MCF 10A (cell line): ENCODE measurements at regions of chr11 and their contacts with region 1.

Region 1: GRCh38 chr11:114099392-114100178 is 40.1 kb downstream of the ZBTB16 start:
- DNase-seq: no peak
- H3K4me3 Mint-ChIP-seq: peak overlapping the region; percentile 7
- H3K27ac Mint-ChIP-seq: peak overlapping the region; percentile 77
- H3K4me1 Mint-ChIP-seq: peaks cover 79% of the 10 kb centered on the region
- H3K27me3 Mint-ChIP-seq: no peaks in the 10 kb centered on the region
- CTCF ChIP-seq: no peak

Region 2: DNA sequence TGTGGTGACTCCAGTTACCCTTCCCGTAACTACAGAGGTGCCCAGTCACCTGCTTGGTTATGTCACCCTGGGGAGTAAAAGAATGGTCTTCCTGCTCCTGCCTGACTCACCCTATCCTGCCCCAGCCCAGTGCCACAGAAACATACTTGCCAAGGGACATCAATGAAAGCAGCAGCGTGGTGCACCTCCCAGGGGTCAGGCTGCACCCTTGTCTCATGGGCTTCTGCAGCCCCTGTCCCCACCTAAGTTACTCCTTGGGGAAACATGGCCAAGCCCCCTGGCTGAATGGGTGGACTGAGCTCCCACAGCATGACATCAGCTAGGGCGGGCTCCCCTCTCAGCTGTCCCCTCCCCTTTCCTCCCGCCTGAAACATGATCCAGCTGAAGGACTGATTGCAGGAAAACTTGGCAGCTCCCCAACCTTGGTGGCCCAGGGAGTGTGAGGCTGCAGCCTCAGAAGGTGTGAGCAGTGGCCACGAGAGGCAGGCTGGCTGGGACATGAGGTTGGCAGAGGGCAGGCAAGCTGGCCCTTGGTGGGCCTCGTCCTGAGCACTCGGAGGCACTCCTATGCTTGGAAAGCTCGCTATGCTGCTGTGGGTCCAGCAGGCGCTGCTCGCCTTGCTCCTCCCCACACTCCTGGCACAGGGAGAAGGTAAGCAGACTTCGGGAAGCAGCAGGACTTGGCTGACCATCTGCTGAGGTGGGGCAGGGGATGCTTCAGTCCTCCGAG is 124.7 kb before region 1 on chr11 and contains the start of gene HTR3A:
- CTCF ChIA-PET with region 1: no interaction called
- POLR2A ChIA-PET with region 1: no interaction called
- intact Hi-C with region 1: no loop called
- DNase-seq: peak; percentile 75
- H3K4me3 Mint-ChIP-seq: no peak within 1 kb of the TSS
- H3K27ac Mint-ChIP-seq: no peak within 1 kb of the TSS
- H3K4me1 Mint-ChIP-seq: peaks cover 10% of the 10 kb centered on the region
- H3K27me3 Mint-ChIP-seq: peaks cover 80% of the 10 kb centered on the region
- CTCF ChIP-seq: no peak
- total RNA-seq, gene HTR3A: not detected in 2 replicates

Region 3: DNA sequence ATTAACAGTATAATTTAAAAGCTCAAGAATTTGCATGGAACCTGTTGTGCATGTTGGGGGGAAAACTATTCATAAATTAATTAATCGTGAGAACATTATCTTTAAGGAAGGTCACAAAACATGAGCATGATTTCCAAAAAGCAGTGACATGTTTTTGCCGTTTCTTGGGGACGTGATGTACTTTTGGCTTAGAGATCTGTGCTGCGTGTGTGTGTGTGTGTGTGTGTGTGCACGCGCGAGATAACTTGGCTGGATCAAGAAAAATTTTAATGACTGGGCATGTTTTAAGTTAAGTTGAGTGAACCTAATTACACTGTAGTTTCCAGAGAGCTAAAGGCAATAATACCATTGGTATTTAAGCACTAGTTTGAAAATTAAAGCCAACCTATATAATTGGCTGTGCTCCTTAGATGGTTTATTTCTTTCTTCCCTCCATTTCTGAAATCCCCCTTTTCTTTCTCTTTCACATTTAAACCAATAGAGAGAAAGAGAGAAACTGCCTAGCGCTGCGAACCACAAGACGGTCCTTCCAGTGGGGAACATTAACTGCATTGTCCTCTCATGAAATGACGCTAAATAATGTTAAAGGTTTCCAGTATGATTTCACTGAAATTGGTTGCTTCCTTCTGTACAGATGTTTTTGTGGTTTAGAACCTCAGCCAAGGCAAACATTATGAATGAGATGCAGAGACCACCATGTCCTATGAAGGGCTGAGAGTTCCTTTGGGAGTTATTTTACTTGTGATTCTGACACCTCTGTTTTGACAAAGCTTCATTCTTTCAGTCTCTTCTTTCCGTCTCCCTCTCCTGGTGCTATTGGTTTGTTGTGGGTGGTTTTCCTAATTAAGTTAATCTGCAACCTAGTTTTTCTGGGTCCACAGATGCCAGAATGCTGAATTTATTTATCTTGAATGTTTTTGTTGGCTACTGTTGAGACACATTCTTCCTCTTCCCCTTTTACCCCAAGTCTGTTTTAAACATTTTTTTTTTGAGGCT is 11.7 kb after region 1 on chr11:
- CTCF ChIA-PET with region 1: interaction called, 4 read pairs
- POLR2A ChIA-PET with region 1: interaction called, 12 read pairs
- intact Hi-C with region 1: no loop called
- DNase-seq: peak; percentile 56
- H3K4me3 Mint-ChIP-seq: peak overlapping the region; percentile 58
- H3K27ac Mint-ChIP-seq: peak overlapping the region; percentile 88
- H3K4me1 Mint-ChIP-seq: peaks cover 85% of the 10 kb centered on the region
- H3K27me3 Mint-ChIP-seq: no peaks in the 10 kb centered on the region
- CTCF ChIP-seq: no peak

Region 4: GRCh38 chr11:114367244-114367957 is 267.8 kb after region 1 on chr11:
- CTCF ChIA-PET with region 1: no interaction called
- POLR2A ChIA-PET with region 1: no interaction called
- intact Hi-C with region 1: no loop called
- DNase-seq: no peak
- H3K4me3 Mint-ChIP-seq: peak overlapping the region; percentile 10
- H3K27ac Mint-ChIP-seq: peak overlapping the region; percentile 41
- H3K4me1 Mint-ChIP-seq: peaks cover 26% of the 10 kb centered on the region
- H3K27me3 Mint-ChIP-seq: no peaks in the 10 kb centered on the region
- CTCF ChIP-seq: no peak

Region 5: GRCh38 chr11:114447892-114448291 is 348.3 kb after region 1 on chr11:
- CTCF ChIA-PET with region 1: no interaction called
- POLR2A ChIA-PET with region 1: no interaction called
- intact Hi-C with region 1: no loop called
- DNase-seq: no peak
- H3K4me3 Mint-ChIP-seq: no peak overlapping the region
- H3K27ac Mint-ChIP-seq: peak overlapping the region; percentile 32
- H3K4me1 Mint-ChIP-seq: peaks cover 21% of the 10 kb centered on the region
- H3K27me3 Mint-ChIP-seq: no peaks in the 10 kb centered on the region
- CTCF ChIP-seq: no peak

Region 6: GRCh38 chr11:114610984-114611944 is 511.7 kb after region 1 on chr11:
- CTCF ChIA-PET with region 1: no interaction called
- POLR2A ChIA-PET with region 1: no interaction called
- intact Hi-C with region 1: no loop called
- DNase-seq: no peak
- H3K4me3 Mint-ChIP-seq: no peak overlapping the region
- H3K27ac Mint-ChIP-seq: no peak overlapping the region
- H3K4me1 Mint-ChIP-seq: no peaks in the 10 kb centered on the region
- H3K27me3 Mint-ChIP-seq: no peaks in the 10 kb centered on the region
- CTCF ChIP-seq: no peak